Activated CD8-positive, alpha-beta T cell treated with anti-CD3 and anti-CD28 coated beads for 36 hours (primary cell): ENCODE measurements at regions of chr18 and their contacts with region 1.

Region 1: GRCh38 chr18:9136315-9137155 is at the start of gene ANKRD12:
- DNase-seq: peak; percentile 96
- ATAC-seq: peak; percentile 81
- H3K4me3 Mint-ChIP-seq: peak within 1 kb of the TSS; percentile 97
- H3K27ac Mint-ChIP-seq: peak within 1 kb of the TSS; percentile 99
- H3K4me1 Mint-ChIP-seq: peaks cover 50% of the 10 kb centered on the region
- H3K27me3 Mint-ChIP-seq: no peaks in the 10 kb centered on the region
- CTCF ChIP-seq: no peak
- total RNA-seq, gene ANKRD12: 62.5 to 68.4 TPM

Region 2: DNA sequence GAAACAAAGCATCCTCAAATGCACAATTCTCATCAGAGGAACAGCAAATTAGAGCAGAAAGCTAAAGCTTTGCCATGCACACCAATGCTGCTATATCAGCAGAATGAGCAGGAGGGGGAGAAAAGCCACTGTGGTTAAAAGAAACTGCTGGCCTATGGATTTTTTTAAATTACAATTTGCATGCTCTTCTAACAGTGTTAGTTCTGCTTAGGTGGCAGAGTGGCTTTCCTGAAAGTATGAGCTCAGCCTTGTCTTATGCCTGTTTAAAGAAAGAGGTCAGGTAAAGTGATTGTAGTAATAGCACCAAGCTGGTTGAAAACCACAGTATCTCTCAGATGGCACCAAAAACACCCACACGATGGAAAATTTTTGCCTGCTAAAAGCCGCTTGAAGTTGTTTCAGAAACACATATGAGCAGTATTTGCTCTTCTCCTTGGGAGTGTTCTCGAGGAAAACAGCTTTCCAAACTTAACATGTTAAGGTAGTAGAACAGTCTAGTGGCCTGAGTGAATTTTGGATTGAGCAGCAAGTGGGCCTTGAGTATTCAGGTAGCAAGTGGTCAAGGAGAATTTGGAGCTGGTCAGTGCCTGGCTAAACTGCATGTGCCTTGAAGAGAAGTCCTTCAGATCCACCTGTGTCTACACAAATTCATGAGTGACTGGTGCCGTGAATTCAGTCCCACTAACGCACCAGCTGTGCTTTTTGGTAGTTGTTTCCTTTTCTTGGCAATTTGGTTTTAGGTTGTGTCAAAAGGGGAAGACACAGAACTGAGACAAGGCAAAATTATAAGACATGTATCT is 53.6 kb before region 1 on chr18:
- CTCF ChIA-PET with region 1: interaction called, 24 read pairs
- POLR2A ChIA-PET with region 1: interaction called, 81 read pairs
- intact Hi-C with region 1: loop called (anchors 5 kb)
- DNase-seq: peak; percentile 85
- ATAC-seq: peak; percentile 86
- H3K4me3 Mint-ChIP-seq: peak overlapping the region; percentile 55
- H3K27ac Mint-ChIP-seq: peak overlapping the region; percentile 94
- H3K4me1 Mint-ChIP-seq: peaks cover 38% of the 10 kb centered on the region
- H3K27me3 Mint-ChIP-seq: no peaks in the 10 kb centered on the region
- CTCF ChIP-seq: no peak

Region 3: DNA sequence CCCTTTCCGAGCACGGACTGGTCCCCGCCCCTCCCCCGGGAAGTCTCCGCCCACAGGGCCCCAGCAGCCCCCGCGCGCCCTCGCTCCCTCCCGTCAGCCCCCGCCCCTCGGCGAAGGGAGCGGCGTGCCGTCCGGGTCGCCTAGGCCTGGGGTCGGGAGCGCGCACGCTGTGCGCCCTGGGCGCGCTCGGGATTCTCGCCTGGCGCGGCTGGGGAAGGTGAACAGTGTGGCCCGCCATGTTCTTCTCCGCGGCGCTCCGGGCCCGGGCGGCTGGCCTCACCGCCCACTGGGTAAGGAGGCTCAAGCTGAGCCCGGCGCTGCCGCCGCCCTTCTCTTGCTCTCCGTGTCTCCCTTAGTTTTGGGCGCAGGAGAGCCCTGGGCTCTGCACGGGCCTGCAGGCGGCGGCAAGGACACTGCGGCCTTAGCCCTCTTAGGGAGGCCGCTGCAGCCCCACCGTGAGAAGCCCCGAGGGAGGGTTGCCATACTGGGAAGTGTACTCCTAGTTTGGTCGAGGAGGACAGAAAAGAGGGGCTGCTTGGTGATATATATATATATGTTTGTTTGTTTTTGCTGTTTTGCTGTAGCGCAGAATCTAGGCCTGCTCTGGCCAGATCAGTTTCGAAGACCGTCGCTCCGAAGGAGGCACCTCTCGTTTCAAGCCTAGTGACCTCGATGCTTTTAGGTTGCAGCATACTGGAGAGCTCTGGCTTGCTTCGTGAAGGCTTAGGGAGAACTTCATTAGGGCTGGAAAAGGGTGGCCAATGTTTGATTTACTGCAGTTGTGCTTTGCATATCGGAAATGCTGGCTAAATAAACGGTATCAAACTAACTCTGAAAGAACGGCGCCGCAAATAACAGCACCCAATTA is 33.8 kb before region 1 on chr18 and contains the start of gene NDUFV2:
- CTCF ChIA-PET with region 1: interaction called, 31 read pairs
- POLR2A ChIA-PET with region 1: interaction called, 278 read pairs
- intact Hi-C with region 1: loop called (anchors 5 kb)
- DNase-seq: peak; percentile 98
- ATAC-seq: peak; percentile 95
- H3K4me3 Mint-ChIP-seq: peak within 1 kb of the TSS; percentile 86
- H3K27ac Mint-ChIP-seq: peak within 1 kb of the TSS; percentile 97
- H3K4me1 Mint-ChIP-seq: peaks cover 43% of the 10 kb centered on the region
- H3K27me3 Mint-ChIP-seq: no peaks in the 10 kb centered on the region
- CTCF ChIP-seq: no peak
- total RNA-seq, gene NDUFV2: 324 to 332 TPM

Region 4: DNA sequence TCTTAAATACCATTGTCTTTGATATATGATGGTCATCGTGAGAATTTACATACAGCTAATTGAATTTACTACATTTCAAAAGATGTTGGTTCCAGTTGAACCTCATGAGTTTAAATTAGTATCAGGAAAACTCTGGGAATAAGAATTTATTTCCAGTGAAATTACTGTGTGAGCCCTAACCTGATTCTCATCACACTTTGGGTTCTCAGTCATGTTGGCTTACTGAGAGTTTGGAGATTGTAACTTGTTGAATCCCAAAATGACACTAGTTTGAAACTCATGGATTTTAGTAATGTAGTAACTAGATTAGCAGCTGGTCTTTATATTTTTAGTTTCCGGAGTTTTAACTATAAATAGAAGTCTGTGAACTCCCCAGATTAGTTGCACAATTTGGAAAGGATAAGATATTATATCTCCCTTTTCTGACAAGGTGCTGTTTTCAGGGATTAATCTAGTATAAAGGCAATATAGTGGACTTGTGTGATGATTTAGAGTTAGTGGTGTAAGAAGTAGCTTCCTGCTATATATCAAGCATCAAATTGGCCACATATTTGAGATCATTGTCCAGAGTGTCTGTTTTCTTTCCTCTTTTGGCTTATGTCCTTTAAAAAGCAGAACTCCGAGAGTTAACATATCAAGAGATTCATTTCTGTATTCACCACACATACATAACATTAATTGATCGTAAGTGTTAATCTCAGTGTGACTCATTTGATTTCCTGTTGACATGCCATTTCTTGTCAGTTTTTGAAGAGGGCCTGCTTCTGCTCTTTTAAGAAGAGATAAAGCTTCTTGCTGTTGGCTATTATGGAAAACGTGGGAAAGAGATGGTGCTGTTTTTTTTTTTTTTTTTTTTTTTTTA is 18.3 kb before region 1 on chr18:
- CTCF ChIA-PET with region 1: interaction called, 4 read pairs
- POLR2A ChIA-PET with region 1: interaction called, 278 read pairs
- intact Hi-C with region 1: loop called (anchors 2 kb)
- DNase-seq: no peak
- ATAC-seq: peak; percentile 45
- H3K4me3 Mint-ChIP-seq: peak overlapping the region; percentile 58
- H3K27ac Mint-ChIP-seq: peak overlapping the region; percentile 96
- H3K4me1 Mint-ChIP-seq: peaks cover 87% of the 10 kb centered on the region
- H3K27me3 Mint-ChIP-seq: no peaks in the 10 kb centered on the region
- CTCF ChIP-seq: no peak

Region 5: DNA sequence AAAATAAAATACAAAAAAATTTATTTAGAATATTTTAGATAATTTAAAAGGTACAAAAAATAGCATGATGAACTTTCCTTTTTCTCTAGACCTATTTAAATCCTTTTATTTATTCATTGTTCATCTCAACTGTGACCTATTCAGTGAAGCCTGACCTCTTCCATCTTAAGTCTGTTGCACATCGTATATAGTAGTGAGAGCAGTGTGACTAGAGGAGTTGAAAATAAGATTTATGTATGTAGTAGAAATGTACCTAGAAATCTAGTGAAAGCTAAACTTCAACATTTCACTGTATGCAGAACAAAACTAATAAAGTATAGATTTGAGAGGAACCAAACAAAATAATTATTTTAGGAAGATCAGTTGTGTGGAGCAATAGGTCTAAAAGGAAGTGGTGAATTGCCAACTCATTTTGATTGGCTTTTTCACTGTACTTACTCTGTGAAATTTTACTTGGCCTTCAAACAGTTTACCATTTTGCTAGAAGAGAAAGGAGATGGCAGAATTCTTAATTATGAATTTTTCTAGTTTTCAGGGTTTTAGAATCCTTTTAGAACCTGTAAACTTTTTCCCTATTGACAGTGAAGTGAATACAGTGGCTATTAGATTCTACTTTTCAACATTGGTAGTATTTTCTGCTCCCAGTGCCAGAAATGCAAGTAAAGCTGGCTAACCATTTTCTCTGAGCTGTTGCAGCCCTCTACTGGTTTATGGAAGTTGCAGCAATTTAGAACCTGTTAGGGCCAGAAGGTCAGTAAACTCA is 11.1 kb after region 1 on chr18:
- CTCF ChIA-PET with region 1: interaction called, 3 read pairs
- POLR2A ChIA-PET with region 1: interaction called, 22 read pairs
- intact Hi-C with region 1: no loop called
- DNase-seq: peak; percentile 42
- ATAC-seq: peak; percentile 64
- H3K4me3 Mint-ChIP-seq: peak overlapping the region; percentile 50
- H3K27ac Mint-ChIP-seq: peak overlapping the region; percentile 91
- H3K4me1 Mint-ChIP-seq: peaks cover 75% of the 10 kb centered on the region
- H3K27me3 Mint-ChIP-seq: no peaks in the 10 kb centered on the region
- CTCF ChIP-seq: peak; percentile 86

Region 6: DNA sequence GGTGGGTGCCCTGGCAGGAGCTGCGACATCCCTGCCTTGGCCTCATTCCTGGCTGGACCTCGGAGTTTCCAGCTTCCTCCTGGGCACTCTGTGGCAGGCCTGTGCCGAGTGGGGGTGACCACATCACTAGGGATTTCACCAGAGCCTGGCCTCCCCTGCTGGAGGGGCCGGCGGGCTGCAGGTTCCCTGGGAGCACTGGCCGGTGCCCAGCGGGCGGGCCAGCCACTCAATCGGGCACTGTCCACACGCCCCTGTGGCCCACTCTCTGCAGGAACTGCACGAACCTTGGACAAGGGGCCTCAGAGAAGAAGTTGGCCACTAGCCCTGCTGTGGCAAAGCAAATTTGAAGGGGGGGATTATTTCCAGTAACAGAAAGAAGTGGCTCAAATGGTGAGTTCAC is 1207.2 kb after region 1 on chr18:
- CTCF ChIA-PET with region 1: no interaction called
- POLR2A ChIA-PET with region 1: no interaction called
- intact Hi-C with region 1: no loop called
- DNase-seq: no peak
- ATAC-seq: no peak
- H3K4me3 Mint-ChIP-seq: no peak overlapping the region
- H3K27ac Mint-ChIP-seq: no peak overlapping the region
- H3K4me1 Mint-ChIP-seq: no peaks in the 10 kb centered on the region
- H3K27me3 Mint-ChIP-seq: no peaks in the 10 kb centered on the region
- CTCF ChIP-seq: no peak